Right ventricle myocardium inferior (tissue), 1 donor: ENCODE measurements at regions of chr13 and their contacts with region 1.

Region 1: DNA sequence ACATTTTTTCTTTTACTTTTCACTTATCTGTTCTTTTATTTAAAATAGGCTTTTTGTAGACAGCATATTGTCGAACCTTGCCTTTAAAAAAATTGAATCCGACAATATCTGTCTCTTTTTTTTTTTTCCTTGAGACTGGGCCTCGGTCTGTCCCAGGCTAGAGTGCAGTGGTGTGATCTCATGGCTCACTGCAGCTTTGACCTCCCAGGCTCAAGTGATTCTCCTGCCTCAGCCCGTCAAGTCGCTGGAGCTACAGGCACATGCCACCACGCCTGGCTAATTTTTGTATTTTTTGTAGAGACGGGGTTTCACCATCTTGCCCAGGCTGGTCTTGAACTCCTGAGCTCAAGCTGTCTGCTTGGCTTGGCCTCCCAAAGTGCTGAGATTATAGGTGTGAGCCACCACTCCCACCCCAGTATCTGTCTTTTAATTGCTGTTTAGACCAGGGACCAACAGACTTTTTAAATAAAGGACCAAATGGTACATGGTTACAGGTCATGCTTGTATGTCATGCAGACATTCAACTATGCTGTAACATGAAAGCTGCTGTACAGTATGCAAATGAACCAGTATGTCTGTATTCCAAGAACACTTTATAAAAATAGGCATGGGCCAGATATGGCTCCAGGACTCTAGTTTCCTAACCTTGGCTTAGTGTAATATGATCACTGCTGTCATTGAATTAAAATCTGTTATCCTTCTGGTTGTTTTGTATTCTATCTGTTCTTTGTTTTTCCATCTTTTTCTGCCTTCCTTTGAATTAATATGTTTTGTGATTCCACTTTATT is 80.3 kb downstream of the GJA3 start:
- DNase-seq: no peak
- ATAC-seq: peak; percentile 93

Region 2: DNA sequence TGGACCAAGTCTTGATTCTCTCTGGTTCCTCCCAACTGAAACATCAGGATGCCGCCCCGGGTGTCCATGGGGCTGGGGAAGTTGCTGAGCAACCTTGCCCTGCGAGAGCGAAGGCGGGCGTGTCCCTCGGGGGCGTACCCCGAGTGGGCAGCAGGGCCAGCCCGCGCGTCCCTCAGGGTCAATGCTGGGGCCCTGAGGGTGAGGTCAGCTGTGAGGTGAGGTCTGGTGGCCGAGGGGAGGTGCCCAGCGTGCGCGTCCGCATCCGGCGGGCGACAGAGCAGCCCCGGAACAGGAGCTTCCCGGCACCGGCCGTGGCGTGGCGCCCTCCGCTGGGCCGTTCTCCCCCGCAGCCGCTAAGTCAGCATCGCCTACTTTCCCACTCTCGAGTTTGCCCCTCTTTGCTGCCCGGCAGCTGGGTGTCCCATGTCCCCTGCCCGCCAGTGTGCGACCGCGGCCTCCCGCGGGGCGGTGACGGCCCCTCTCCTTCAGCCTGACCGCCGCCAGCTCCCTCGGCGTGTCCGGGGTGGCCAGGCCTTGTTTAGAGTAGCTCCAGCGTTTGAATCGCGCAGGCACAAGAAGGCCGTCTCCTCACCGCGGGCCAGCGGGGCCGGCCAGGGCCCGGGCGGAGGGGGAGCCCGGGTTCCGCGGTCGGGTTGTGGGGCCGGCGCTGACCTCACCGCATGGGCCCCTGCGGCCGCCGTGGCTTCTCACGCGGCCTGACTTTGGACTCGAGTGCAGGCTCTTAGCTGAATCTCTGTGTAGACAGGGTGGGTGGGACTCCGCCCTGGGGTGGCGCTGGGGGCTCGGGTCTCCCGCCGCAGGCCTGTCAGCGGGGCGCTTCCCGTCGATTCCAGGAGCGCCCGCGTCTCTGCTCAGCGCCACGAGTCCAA is 47.3 kb after region 1 on chr13:
- intact Hi-C with region 1: loop called (anchors 5 kb)
- DNase-seq: peak; percentile 85
- ATAC-seq: peak; percentile 80